ENCODE measurements at regions of chr17 and their contacts with region 1.

Region 1: DNA sequence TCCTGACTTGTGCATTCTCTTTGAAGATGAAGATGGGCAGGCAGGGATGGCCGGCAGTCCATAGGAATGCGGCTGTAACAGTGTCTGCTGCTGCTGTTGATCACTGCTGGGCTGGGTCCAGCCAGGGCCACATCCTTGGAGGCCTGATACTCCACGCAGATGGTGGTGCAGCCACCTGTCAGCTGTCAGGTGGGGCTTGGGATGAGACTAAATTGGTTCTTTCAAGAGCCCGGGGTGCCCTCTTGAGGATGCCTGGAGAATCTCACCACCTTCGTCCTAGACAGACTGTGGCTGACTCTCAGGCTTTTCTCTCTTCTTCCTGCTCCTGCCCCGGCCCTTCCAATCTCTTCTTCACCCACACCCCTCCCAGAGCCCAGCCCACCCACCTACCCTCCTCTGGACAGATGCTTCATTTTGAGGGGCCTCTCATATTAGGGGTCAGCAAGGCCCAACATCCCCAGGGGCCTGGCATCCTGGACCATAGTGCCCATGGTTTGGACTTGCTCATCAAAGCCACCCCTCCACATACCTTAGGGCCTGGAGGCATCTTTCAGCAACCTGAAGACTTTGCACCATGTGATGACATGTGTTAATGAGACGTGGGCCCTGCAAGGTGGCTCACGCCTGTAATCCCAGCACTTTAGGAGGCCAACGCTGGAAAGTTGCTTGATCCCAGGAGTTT is 19.1 kb downstream of the OSBPL7 start:
- DNase-seq: peak; percentile 83
- H3K4me3 Mint-ChIP-seq: no peak overlapping the region
- H3K27ac Mint-ChIP-seq: no peak overlapping the region
- H3K4me1 Mint-ChIP-seq: no peaks in the 10 kb centered on the region
- H3K27me3 Mint-ChIP-seq: peaks cover 53% of the 10 kb centered on the region
- CTCF ChIP-seq: peak; percentile 75

Region 2: GRCh38 chr17:47698749-47699535 is 103.5 kb before region 1 on chr17:
- CTCF ChIA-PET with region 1: no interaction called
- intact Hi-C with region 1: loop called (anchors 2 kb)
- DNase-seq: peak; percentile 85
- H3K4me3 Mint-ChIP-seq: no peak overlapping the region
- H3K27ac Mint-ChIP-seq: no peak overlapping the region
- H3K4me1 Mint-ChIP-seq: peaks cover 8% of the 10 kb centered on the region
- H3K27me3 Mint-ChIP-seq: peaks cover 53% of the 10 kb centered on the region
- CTCF ChIP-seq: peak; percentile 99

Region 3: GRCh38 chr17:47751471-47751870 is 51.0 kb before region 1 on chr17:
- CTCF ChIA-PET with region 1: no interaction called
- intact Hi-C with region 1: no loop called
- DNase-seq: no peak
- H3K4me3 Mint-ChIP-seq: no peak overlapping the region
- H3K27ac Mint-ChIP-seq: no peak overlapping the region
- H3K4me1 Mint-ChIP-seq: no peaks in the 10 kb centered on the region
- H3K27me3 Mint-ChIP-seq: peaks cover 60% of the 10 kb centered on the region
- CTCF ChIP-seq: no peak

Region 4: DNA sequence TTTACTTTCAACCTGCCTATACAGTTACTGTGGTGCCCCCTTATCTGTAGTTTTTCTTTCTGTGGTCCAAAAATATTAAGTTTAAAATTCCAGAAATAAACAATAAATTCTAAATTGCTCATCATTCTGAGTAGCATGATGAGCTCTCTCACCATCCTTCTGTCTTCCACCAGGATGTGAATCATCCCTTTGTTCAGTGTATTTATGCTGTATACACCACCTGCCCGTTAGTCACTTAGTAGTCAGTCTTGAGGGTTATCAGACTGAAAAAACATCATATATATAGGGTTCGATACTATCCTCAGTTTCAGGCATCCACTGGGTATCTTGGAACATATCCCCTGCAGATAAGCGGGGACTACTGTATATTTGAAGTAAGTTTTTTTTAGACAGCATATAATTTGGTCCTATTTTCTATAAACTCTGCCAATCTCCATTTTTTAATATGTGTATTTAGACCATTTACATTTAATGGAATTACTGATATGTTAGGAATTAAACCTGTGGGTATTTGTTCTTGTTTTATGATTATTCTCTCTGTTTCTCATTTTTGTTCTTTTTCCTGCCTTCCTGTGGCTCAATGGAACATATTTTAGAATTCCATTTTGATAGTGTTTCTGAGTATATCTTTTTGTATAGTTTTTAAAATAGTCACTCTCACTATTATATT is 38.4 kb before region 1 on chr17:
- CTCF ChIA-PET with region 1: no interaction called
- intact Hi-C with region 1: no loop called
- DNase-seq: no peak
- H3K4me3 Mint-ChIP-seq: no peak overlapping the region
- H3K27ac Mint-ChIP-seq: no peak overlapping the region
- H3K4me1 Mint-ChIP-seq: no peaks in the 10 kb centered on the region
- H3K27me3 Mint-ChIP-seq: peaks cover 80% of the 10 kb centered on the region
- CTCF ChIP-seq: no peak